ENCODE measurements at regions of chr10 and their contacts with region 1.

Region 1: GRCh38 chr10:45672181-45673073 is at the start of gene ZFAND4:
- DNase-seq: peak; percentile 91
- H3K4me3 ChIP-seq: peak within 1 kb of the TSS; percentile 67 to 84 (median 71)
- H3K27ac ChIP-seq: peak within 1 kb of the TSS; percentile 53
- H3K4me1 ChIP-seq: peaks cover 6% of the 10 kb centered on the region
- H3K27me3 ChIP-seq: no peaks in the 10 kb centered on the region
- CTCF ChIP-seq: peak; percentile 43 to 57
- total RNA-seq, gene ZFAND4: 3.2 to 8.8 TPM

Region 2: DNA sequence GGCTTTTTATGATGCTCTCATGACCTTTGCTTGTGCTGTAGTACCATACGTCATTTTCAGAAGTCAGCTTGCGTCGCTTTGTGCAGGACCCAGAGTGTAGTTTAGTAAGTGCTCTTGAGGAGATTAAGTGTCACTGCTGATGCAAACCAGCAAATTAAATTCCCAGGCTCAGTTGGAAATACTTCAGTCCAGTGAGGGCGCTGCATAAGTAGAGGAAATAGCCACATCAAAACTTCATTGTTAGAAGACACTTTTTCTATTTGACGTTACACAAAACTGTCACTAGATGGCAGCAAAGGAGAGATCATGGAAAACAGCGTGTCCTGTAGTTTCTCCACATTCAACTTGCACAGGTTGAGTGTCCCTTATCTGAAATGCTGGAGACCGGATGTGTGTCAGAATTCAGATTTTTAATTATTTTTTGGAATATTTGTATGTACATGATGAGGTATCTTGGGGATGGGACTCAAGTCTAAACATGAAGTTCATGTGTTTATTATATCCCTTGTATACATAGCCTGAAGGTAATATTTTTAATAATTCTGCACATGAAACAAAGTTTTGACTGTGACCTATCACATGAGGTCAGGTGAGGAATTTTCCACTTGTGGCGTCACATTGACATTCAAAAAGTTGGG is 663.8 kb before region 1 on chr10:
- CTCF ChIA-PET with region 1: no interaction called
- dilution Hi-C with region 1: no loop called
- in situ Hi-C with region 1: no loop called
- intact Hi-C with region 1: loop called (anchors 5 kb)
- DNase-seq: peak; percentile 85
- H3K4me3 ChIP-seq: no peak overlapping the region
- H3K27ac ChIP-seq: no peak overlapping the region
- H3K4me1 ChIP-seq: no peaks in the 10 kb centered on the region
- H3K27me3 ChIP-seq: no peaks in the 10 kb centered on the region
- CTCF ChIP-seq: peak; percentile 69 to 77

Region 3: DNA sequence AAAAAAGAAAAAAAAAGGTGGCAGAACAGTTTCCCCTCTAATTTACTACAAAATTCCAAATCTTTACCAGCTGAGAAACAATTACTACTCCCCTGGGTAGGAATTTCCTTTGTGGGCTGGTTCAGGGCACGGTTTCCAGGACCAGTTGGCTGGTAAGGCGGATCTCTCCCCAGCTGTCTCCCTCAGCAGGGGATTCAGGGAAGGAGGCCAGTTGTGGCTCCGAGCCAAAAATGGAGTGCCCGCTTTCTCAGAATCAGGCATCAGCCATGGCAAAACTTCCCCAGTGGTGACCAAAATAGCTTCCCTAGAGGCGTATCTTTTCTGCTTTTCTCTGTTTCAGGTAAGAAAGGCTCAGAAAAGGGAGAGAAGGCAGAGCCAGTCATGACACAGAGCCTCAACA is 580.5 kb before region 1 on chr10:
- CTCF ChIA-PET with region 1: no interaction called
- dilution Hi-C with region 1: no loop called
- in situ Hi-C with region 1: no loop called
- intact Hi-C with region 1: no loop called
- DNase-seq: no peak
- H3K4me3 ChIP-seq: no peak overlapping the region
- H3K27ac ChIP-seq: no peak overlapping the region
- H3K4me1 ChIP-seq: no peaks in the 10 kb centered on the region
- H3K27me3 ChIP-seq: no peaks in the 10 kb centered on the region
- CTCF ChIP-seq: no peak

Region 4: DNA sequence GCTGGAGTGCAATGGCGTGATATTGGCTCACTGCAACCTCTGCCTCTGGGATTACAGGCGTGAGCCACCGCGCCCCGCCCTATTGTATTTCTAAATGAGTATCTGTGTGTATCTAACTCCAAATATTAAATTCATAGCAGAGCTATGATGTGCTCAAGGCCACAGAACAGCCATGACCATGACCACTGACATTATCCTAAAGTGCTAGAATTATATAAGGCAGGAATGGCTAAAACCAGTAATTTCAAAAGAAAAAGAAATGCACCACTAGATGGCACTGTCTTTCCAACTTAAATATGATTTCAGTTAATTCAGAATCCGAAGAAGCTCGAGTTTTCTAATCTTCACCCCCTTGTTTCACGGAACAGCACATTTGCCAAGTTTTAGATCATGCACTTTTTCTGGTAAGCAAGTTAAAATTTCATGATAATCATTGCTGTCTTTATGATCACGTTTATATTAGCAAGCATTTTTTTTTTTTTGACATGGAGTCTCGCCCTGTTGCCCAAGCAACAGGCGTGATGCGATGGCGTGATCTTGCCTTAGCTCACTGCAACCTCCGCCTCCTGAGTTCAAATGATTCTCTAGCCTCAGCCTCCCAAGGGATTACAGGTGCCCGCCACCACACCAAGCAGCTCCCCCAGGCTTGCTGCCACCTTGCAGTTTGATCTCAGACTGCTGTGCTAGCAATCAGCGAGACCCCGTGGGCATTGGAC is 422.3 kb before region 1 on chr10:
- CTCF ChIA-PET with region 1: no interaction called
- dilution Hi-C with region 1: no loop called
- in situ Hi-C with region 1: no loop called
- intact Hi-C with region 1: loop called (anchors 1 kb)
- DNase-seq: peak; percentile 58
- H3K4me3 ChIP-seq: no peak overlapping the region
- H3K27ac ChIP-seq: no peak overlapping the region
- H3K4me1 ChIP-seq: no peaks in the 10 kb centered on the region
- H3K27me3 ChIP-seq: no peaks in the 10 kb centered on the region
- CTCF ChIP-seq: peak; percentile 27 to 49

Region 5: DNA sequence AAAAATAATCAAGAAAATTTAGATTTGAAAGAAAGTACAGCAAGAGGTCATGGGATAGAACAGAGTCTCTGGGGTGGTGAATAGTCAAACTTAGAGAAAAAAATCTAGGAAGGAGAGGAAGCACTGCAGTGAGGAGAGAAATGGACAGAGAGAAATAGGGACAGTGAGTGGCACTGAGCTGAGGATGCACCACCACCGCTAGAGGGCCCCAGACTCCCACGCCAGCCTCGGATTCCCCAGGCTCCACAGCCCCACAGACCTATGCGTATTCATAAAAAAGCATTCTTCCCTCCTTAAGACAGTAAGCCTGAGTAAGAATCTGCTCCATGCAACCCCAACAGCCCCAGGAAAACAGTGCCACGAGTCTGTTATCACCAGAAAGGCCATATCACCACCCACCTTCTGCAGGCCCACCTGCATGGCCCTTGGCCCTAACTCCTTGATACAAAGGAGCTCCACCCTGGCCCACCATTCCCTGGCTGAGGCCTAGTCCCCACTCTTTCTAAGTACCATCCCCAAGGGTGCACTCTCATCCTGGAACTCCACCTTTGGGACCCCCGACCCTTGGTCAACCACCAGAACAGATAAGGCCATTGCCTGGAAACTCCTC is 207.4 kb before region 1 on chr10:
- CTCF ChIA-PET with region 1: interaction called, 8 read pairs
- dilution Hi-C with region 1: loop called (anchors 5 kb)
- in situ Hi-C with region 1: loop called in 1 of 2 experiments (anchors 25 kb)
- intact Hi-C with region 1: loop called (anchors 2 kb)
- DNase-seq: peak; percentile 47
- H3K4me3 ChIP-seq: no peak overlapping the region
- H3K27ac ChIP-seq: no peak overlapping the region
- H3K4me1 ChIP-seq: no peaks in the 10 kb centered on the region
- H3K27me3 ChIP-seq: no peaks in the 10 kb centered on the region
- CTCF ChIP-seq: peak; percentile 95 to 97

Region 6: DNA sequence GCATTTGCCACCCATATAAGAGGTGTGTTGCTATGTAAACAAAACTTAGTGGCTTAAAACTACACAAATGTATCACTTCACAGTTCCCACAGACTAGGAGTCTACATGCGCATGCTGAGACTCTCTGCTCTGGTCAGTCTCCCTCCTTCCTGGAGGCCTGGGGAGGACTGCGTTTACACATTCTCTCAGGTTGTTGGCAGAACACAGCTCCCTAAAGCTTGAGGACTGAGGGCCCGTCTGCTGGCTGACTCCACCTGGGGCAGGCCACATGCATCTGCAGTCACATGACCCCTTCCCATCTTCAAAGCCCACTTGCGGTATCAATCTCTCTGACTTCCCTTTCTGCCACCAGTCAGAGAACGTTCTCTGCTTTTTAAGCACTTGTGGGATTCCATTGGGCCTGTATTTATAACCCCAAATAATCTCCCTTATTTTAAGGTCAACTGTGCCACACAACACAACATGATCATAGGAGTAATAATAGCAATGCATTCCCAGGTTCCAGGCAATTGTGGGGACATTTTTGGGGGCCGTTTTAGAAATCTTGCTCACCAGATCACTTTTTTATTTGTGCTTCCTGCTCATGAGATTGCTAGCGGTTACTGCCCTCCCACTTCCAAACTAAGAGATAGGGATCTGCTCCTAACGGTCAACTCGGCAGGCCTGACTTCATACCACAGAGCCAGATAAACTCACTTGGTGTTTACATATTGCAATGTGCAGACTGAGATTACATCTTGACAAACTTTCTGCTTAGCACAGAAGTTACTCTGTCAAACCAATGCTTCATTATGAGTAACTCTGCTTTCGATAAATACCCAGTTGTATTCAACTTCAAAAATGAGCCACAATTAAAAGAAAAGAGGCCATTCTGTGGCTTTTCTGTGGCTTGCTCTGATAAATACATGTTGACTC is 202.1 kb before region 1 on chr10:
- CTCF ChIA-PET with region 1: interaction called, 8 read pairs
- dilution Hi-C with region 1: loop called (anchors 5 kb)
- in situ Hi-C with region 1: loop called in 1 of 2 experiments (anchors 25 kb)
- intact Hi-C with region 1: loop called (anchors 2 kb)
- DNase-seq: peak; percentile 34
- H3K4me3 ChIP-seq: no peak overlapping the region
- H3K27ac ChIP-seq: no peak overlapping the region
- H3K4me1 ChIP-seq: no peaks in the 10 kb centered on the region
- H3K27me3 ChIP-seq: no peaks in the 10 kb centered on the region
- CTCF ChIP-seq: no peak

Region 7: GRCh38 chr10:45514291-45515270 is 157.8 kb before region 1 on chr10:
- CTCF ChIA-PET with region 1: no interaction called
- dilution Hi-C with region 1: no loop called
- in situ Hi-C with region 1: no loop called
- intact Hi-C with region 1: loop called (anchors 1 kb)
- DNase-seq: peak; percentile 86
- H3K4me3 ChIP-seq: peak overlapping the region; percentile 50 to 65 (median 52)
- H3K27ac ChIP-seq: peak overlapping the region; percentile 47
- H3K4me1 ChIP-seq: peaks cover 26% of the 10 kb centered on the region
- H3K27me3 ChIP-seq: no peaks in the 10 kb centered on the region
- CTCF ChIP-seq: no peak

Measured in mammary epithelial cell (primary cell).